Activated T-helper 1 cell treated with anti-CD3 and anti-CD28 coated beads, Interleukin-12 subunit alpha, Interleukin-12 subunit beta, Interleukin-2, Interleukin-4 antibody, amounts not matched to agents 30 ng/mL and 10 ng/mL and 1 ng/mL, durations not matched to agents 14 hours and 24 hours and 36 hours (primary cell): ENCODE measurements at regions of chr3 and their contacts with region 1.

Region 1: DNA sequence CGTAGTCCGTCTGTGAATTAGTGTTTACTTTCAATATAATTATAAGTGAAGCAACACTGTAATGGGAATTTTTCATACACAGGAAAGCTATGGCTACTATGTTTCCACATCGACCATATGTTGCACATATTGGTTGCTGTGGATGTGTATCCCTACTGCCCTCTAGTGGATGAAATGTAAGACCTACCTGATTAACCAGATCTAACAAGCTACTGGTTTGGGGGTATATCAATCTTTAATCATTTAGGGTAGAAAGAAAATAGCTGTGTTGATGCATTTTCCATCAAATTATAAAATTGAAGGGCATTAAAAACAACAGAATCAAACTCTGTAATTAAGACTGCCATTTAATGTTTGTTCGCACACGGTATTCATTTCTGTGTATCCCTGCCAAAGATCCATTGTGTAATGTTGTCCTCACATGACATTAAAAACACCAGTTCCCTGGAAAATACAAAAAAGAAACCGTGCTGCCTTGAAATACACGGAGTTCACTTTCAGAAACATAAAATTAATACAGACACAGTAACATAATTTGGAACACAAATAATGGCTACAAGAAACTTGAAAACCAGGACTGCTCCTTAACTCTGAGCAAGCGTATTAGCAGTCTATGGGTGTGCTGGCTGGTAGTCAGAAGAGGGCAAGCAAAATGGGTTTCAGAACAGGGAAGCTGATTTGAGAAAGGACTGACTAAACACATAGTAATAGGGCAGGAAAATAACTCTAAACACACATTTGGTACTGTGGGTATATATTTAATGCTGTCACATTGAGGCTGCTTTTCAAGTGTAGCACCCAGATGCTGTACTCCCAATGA is 125.1 kb downstream of the TIGIT start:
- DNase-seq: no peak
- H3K4me3 Mint-ChIP-seq: no peak overlapping the region
- H3K27ac Mint-ChIP-seq: peak overlapping the region; percentile 43
- H3K4me1 Mint-ChIP-seq: peaks cover 20% of the 10 kb centered on the region
- H3K27me3 Mint-ChIP-seq: peaks cover 5% of the 10 kb centered on the region

Region 2: GRCh38 chr3:113947372-113948014 is 471.4 kb before region 1 on chr3 and contains the start of gene ZDHHC23:
- intact Hi-C with region 1: loop called (anchors 1 kb)
- DNase-seq: peak; percentile 66
- H3K4me3 Mint-ChIP-seq: peak within 1 kb of the TSS; percentile 85
- H3K27ac Mint-ChIP-seq: peak within 1 kb of the TSS; percentile 79
- H3K4me1 Mint-ChIP-seq: no peaks in the 10 kb centered on the region
- H3K27me3 Mint-ChIP-seq: peaks cover 41% of the 10 kb centered on the region
- total RNA-seq, gene ZDHHC23: 0.88 and 1.8 TPM in 2 replicates

Region 3: DNA sequence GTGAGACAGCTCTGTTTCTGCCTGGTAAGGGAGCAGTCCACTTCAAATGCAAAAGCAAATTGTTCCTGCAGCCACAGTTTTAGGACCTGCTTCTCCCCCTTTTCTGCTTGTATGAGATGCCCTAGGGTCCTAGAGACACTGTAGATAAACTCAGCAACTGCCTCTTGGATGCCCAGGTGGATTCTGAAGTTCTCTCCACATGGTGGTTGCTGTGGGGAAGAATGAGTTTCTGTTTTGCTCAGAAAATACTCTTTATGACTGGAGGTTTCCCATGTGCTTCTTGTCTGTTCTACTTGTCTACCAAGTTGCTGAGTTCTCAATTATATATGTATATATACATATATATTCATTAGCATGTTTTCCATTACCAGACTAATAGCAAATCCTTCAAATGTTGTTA is 176.0 kb before region 1 on chr3:
- intact Hi-C with region 1: loop called (anchors 1 kb)
- DNase-seq: peak; percentile 24
- H3K4me3 Mint-ChIP-seq: no peak overlapping the region
- H3K27ac Mint-ChIP-seq: peak overlapping the region; percentile 45
- H3K4me1 Mint-ChIP-seq: peaks cover 23% of the 10 kb centered on the region
- H3K27me3 Mint-ChIP-seq: peaks cover 4% of the 10 kb centered on the region

Region 4: GRCh38 chr3:114319453-114319852 is 99.5 kb before region 1 on chr3:
- intact Hi-C with region 1: no loop called
- DNase-seq: no peak
- H3K4me3 Mint-ChIP-seq: no peak overlapping the region
- H3K27ac Mint-ChIP-seq: no peak overlapping the region
- H3K4me1 Mint-ChIP-seq: peaks cover 50% of the 10 kb centered on the region
- H3K27me3 Mint-ChIP-seq: peaks cover 2% of the 10 kb centered on the region

Region 5: DNA sequence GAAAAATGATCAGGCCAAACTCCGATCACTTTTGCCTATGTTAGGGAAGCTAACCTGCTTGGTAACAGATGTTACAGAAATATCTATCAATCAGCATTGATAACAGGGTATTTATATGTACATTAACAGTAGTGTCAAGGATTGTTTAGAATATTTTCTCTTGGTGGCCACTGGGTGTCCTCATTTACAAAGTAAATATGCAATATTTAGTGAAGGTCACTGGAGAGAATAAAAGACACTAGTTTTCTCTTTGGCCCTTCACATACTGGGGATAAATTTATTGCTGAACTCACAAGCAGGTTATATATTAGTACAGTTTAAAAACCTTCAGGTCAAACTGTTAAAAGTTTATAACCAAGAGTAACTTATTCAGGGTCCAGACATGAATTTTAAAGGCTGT is 56.1 kb before region 1 on chr3:
- intact Hi-C with region 1: loop called (anchors 2 kb)
- DNase-seq: no peak
- H3K4me3 Mint-ChIP-seq: no peak overlapping the region
- H3K27ac Mint-ChIP-seq: no peak overlapping the region
- H3K4me1 Mint-ChIP-seq: no peaks in the 10 kb centered on the region
- H3K27me3 Mint-ChIP-seq: peaks cover 3% of the 10 kb centered on the region

Region 6: GRCh38 chr3:115147329-115148141 is 728.6 kb after region 1 on chr3:
- intact Hi-C with region 1: loop called (anchors 1 kb)
- DNase-seq: peak; percentile 96
- H3K4me3 Mint-ChIP-seq: peak overlapping the region; percentile 96
- H3K27ac Mint-ChIP-seq: peak overlapping the region; percentile 98
- H3K4me1 Mint-ChIP-seq: peaks cover 16% of the 10 kb centered on the region
- H3K27me3 Mint-ChIP-seq: no peaks in the 10 kb centered on the region

Region 7: DNA sequence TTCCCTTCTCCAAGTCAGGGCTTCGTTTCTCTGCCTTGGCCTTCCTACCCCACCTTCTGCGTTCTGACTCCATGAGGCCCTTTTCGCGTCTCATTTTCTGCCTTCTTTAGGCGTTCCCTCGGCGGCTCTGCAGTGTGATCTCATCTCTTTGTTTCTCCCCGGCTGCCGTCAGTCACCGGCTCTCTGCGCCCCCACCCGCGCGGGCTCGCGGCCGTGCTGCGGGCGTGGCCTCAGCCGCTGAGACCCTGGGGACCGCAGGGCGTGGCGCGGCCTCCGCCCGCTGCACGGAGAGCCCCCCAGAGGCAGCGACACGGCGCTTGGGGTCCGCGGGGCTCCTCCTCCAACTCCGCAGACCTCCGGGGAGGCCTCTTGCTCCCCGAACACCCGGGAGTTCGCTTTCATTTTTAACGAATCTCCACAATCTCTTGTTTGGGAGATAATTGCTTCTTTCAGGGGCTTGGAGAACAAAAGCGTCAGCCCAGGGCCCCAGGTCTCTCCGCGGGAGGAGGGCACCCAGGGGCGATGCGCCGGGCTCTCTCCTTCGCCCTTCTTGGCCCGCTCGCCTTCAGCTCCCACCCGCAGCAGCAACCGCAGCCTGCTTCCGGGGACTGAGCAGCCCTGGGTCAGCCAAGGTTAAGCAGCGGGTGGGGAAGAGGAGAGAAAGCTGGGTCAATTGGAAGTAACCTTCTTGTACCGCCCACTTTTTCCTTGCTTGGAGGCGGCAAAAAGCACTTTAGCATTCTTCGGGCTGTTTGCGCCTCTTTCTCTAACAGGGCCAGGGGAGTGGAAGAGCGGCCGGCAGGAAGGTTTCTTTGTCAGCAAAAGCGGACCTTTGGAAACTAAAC is 1239.6 kb after region 1 on chr3:
- intact Hi-C with region 1: no loop called
- DNase-seq: peak; percentile 69
- H3K4me3 Mint-ChIP-seq: peak overlapping the region; percentile 86
- H3K27ac Mint-ChIP-seq: peak overlapping the region; percentile 90
- H3K4me1 Mint-ChIP-seq: peaks cover 32% of the 10 kb centered on the region
- H3K27me3 Mint-ChIP-seq: peaks cover 9% of the 10 kb centered on the region